Panc1 (cell line): ENCODE measurements at regions of chr7 and their contacts with region 1.

Region 1: DNA sequence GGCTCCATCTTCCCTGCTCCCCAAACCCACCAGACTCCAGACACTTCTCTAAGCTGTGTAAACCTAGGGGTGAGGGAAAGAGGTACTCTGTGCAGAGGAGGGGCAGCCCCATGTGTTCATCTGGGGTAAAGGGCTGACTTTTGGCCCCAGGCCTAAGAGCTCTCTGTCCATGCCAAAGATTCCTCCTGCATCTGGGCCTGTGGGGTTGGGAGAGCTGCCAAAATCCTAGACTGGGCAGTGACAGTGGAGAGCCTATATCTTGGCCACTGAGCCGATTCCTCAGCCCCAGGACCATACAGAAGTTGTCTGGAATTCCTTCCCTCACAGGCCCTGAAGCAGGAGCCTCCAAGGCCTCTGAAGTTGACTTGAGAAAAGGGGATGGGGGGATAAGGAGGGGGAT is 25.3 kb upstream of the LEP start:
- DNase-seq: no peak
- ATAC-seq: no peak
- H3K4me3 ChIP-seq: no peak overlapping the region
- H3K27ac ChIP-seq: no peak overlapping the region
- H3K4me1 ChIP-seq: no peaks in the 10 kb centered on the region
- H3K27me3 ChIP-seq: peaks cover 14% of the 10 kb centered on the region; the same call in 1 of the 2 replicates
- CTCF ChIP-seq: no peak

Region 2: DNA sequence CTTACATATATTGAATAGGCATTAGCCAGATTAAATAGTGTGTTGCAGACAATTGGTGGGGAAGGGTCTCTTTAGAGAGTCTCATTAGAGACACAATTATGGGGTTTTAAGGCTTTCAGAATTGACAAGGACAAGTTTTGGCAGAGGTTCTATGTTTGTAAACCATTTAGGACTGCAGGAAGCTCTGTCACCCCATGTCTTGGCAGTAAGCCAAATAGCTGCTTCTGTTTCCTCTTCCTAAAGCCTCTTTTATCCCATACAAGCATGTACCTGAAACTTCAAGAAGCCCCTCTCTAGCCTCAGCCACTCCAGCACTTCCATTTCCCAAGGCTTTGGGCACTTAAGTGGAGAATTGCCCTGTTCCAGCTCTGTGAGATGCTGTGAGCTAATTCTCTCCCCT is 162.7 kb before region 1 on chr7:
- CTCF ChIA-PET with region 1: no interaction called
- POLR2A ChIA-PET with region 1: interaction called, 13 read pairs
- in situ Hi-C with region 1: no loop called
- intact Hi-C with region 1: no loop called
- DNase-seq: no peak
- ATAC-seq: no peak
- H3K4me3 ChIP-seq: no peak overlapping the region
- H3K27ac ChIP-seq: no peak overlapping the region
- H3K4me1 ChIP-seq: no peaks in the 10 kb centered on the region
- H3K27me3 ChIP-seq: no peaks in the 10 kb centered on the region
- CTCF ChIP-seq: no peak